Activated T-helper 2 cell treated with anti-CD3 and anti-CD28 coated beads, Interferon-gamma antibody, Interleukin-2, Interleukin-4, amounts not matched to agents 10 μg/mL and 5 μg/mL and 100 μg/mL, durations not matched to agents 14 hours and 24 hours and 36 hours (primary cell): ENCODE measurements at regions of chr10 and their contacts with region 1.

Region 1: DNA sequence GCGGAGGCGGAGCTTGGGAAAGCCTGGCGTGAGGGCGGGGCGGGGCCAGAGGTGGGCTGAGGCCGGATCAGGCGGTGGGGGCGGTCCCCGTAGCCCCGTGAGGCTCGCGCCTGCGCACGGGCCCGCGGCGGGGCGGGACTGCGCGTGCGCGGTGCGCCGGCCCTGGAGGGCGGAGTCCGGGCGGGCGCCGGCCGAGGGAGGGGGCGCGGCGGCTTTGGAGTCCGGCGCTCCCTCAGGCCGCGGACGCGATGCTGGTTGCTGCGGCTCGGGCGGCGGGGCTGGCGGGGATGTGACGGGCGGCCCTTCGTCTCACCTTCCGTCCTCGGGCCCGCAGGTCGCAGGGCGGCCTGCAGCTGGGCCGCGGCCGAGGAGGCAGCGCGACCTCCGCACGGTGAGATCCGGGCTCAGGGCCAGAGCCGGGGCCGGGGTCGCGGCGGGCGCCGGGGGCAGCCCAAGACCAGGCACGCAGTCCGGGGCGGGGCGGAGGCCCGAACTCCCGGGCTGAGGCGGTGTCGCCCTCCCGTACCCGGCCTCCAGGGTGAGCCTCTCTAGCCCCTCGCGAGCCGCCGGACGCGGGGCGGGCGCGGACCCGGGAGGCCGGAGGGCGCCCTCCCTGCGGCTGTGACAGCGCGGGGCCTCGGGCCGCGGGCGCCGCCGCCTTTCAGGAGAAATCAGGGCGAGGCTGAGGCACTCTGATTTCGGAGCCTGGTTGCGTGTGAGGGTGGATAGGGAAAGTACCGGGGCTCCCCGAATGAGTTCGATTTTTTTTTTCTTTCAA is at the start of gene CCSER2:
- DNase-seq: peak; percentile 88
- H3K4me3 Mint-ChIP-seq: peak within 1 kb of the TSS; percentile 95
- H3K27ac Mint-ChIP-seq: peak within 1 kb of the TSS; percentile 95
- H3K4me1 Mint-ChIP-seq: peaks cover 32% of the 10 kb centered on the region
- H3K27me3 Mint-ChIP-seq: peaks cover 5% of the 10 kb centered on the region
- total RNA-seq, gene CCSER2: 36.4 and 41.4 TPM in 2 replicates

Region 2: DNA sequence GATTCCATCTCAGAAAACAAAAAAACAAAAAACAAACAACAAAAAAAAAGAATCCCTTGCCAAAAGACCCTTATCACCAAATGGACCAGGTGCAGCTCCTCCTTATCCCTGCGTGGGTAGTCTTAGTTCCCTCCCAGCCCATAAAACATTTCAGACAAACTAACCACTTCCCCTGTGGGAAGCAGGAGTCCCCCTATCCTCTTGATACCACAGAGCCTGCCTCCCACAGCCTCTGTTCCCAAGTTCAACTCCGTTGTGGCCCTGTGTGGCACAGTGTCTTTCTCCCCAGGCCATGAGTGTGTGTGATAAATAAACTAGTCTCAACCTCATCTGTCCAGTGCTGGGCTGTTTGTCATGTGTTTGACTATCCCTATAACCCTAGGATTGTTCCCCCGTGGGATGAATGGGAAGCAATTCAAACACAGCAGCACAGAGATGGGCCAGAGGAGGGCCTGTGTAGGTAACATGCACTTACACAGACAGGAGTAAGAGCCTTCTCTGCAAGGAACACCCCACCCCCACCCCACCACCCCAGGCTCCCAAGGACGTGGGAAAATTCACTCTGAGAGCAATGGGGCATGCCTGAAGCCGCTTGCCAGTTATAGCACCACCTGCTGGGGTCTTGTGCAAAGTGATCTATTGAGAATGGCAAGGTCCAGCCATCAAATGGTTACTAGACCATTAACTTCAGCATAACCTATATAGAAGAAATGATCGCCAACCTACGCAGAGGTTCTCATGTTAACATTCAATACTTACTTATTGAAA is 336.4 kb before region 1 on chr10:
- intact Hi-C with region 1: no loop called
- DNase-seq: no peak
- H3K4me3 Mint-ChIP-seq: no peak overlapping the region
- H3K27ac Mint-ChIP-seq: no peak overlapping the region
- H3K4me1 Mint-ChIP-seq: no peaks in the 10 kb centered on the region
- H3K27me3 Mint-ChIP-seq: peaks cover 4% of the 10 kb centered on the region

Region 3: DNA sequence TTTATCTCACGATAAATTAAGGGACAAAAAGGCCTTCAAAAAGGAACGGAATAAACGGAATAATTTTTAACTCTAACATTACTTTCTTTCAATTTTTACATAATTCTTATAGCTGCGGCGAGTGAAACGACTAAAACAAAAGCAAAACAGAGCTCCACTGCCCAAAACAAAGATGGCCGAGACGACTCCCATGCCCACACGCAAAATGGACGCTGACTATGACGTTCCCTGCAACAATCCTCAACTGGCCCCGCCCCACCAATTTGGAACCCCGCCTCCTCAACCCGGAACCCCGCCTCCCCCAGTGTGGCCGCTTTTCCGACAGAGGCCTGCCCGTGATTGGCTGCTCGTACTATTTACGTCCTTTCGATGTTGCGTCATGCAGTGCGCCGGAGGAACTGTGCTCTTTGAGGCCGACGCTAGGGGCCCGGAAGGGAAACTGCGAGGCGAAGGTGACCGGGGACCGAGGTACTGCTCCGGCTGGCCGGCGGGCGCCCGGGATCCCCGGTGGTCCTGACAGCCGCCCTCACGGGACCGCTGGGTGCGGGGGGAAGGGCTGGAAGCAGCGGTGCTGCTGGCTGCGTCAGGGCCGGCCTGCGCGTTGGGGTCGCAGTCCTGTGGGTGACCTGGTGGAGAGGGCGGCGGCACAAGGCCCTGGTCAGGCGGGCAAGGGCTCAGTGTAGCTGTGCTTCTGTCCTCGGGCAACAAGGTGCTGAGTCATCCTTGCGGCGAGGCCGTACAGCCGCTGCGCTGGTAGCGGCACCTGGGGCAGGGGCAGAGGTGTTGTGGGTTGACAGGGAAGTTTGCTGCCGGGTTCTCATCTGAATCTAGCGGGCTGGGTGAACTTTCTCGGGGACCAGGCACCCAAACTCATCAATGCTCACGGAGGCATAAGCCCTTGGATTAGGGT is 189.2 kb before region 1 on chr10 and contains the start of gene GHITM:
- intact Hi-C with region 1: loop called (anchors 1 kb)
- DNase-seq: peak; percentile 99
- H3K4me3 Mint-ChIP-seq: peak within 1 kb of the TSS; percentile 93
- H3K27ac Mint-ChIP-seq: peak within 1 kb of the TSS; percentile 95
- H3K4me1 Mint-ChIP-seq: peaks cover 17% of the 10 kb centered on the region
- H3K27me3 Mint-ChIP-seq: peaks cover 2% of the 10 kb centered on the region
- total RNA-seq, gene GHITM: 141 TPM in 2 replicates

Region 4: GRCh38 chr10:84293574-84294016 is 35.0 kb before region 1 on chr10:
- intact Hi-C with region 1: loop called (anchors 1 kb)
- DNase-seq: peak; percentile 36
- H3K4me3 Mint-ChIP-seq: no peak overlapping the region
- H3K27ac Mint-ChIP-seq: no peak overlapping the region
- H3K4me1 Mint-ChIP-seq: peaks cover 26% of the 10 kb centered on the region
- H3K27me3 Mint-ChIP-seq: peaks cover 41% of the 10 kb centered on the region

Region 5: DNA sequence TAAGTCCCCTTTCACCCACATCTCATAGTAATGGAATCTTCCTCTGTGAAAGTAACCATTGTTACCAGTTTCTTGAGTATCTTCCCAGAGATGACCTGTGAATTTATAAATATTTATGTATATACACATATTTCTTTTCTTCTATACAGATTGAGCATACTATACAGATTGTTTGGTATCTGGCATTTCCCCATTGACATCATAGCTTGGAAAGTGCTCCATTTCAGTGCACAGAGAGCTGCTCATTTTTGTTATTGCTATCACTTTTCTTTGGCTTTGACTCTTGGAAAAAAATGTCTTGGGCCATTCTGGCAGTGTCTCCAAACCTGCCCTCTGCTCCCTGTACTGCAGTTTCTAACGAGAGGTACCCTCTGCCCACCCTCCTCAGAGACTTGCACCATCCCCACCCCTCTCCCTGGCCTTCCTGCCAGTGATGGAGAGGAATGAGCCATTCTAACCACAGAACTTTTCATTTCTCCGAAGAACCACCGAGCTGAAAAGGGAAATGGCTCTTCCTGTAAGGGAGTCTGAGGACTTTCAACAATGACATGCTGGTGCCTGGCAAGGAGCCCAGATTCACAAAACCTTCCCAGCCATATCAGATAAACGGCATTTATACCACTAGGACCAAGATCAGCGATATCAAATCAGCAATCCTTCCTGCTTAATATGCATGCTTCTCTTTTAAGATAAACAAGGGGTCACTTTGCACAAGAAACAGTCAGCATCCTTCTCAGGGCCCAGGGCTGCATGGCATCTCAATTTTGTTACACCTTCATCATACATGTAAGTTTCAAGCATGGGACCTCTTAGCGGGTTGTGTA is 19.9 kb before region 1 on chr10:
- intact Hi-C with region 1: loop called (anchors 1 kb)
- DNase-seq: peak; percentile 29
- H3K4me3 Mint-ChIP-seq: peak overlapping the region; percentile 5
- H3K27ac Mint-ChIP-seq: peak overlapping the region; percentile 10
- H3K4me1 Mint-ChIP-seq: peaks cover 32% of the 10 kb centered on the region
- H3K27me3 Mint-ChIP-seq: peaks cover 10% of the 10 kb centered on the region

Region 6: GRCh38 chr10:84317174-84317573 is 11.4 kb before region 1 on chr10:
- intact Hi-C with region 1: loop called (anchors 1 kb)
- DNase-seq: no peak
- H3K4me3 Mint-ChIP-seq: no peak overlapping the region
- H3K27ac Mint-ChIP-seq: no peak overlapping the region
- H3K4me1 Mint-ChIP-seq: peaks cover 11% of the 10 kb centered on the region
- H3K27me3 Mint-ChIP-seq: peaks cover 29% of the 10 kb centered on the region

Region 7: DNA sequence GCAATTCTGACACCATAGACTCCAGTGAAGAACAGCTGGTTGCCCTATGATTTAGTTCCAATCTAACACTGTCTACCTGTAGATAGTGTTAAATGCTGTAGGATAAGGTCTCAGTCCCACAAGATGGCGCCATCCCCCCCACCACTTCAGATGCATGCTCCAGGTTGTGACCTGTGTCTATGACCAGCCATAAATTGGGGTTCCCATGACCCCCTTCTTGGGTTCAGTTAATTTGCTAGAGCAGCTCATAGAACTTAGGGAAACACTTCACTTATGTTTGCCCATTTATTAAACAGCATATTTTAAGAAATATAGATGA is 12.9 kb after region 1 on chr10:
- intact Hi-C with region 1: no loop called
- DNase-seq: no peak
- H3K4me3 Mint-ChIP-seq: no peak overlapping the region
- H3K27ac Mint-ChIP-seq: no peak overlapping the region
- H3K4me1 Mint-ChIP-seq: peaks cover 47% of the 10 kb centered on the region
- H3K27me3 Mint-ChIP-seq: no peaks in the 10 kb centered on the region